Tibial artery (tissue), 4 donors: ENCODE measurements at regions of chr22 and their contacts with region 1.

Region 1: GRCh38 chr22:35582861-35583670 is 34.1 kb downstream of the MB start:
- DNase-seq: peak; percentile 32 to 69
- H3K4me3 ChIP-seq: no peak overlapping the region
- H3K27ac ChIP-seq: no peak overlapping the region
- H3K4me1 ChIP-seq: peaks cover 0 to 8% (median 5%) of the 10 kb centered on the region in 4 donors
- H3K27me3 ChIP-seq: no peaks in the 10 kb centered on the region
- CTCF ChIP-seq: peak; percentile 88 to 93

Region 2: DNA sequence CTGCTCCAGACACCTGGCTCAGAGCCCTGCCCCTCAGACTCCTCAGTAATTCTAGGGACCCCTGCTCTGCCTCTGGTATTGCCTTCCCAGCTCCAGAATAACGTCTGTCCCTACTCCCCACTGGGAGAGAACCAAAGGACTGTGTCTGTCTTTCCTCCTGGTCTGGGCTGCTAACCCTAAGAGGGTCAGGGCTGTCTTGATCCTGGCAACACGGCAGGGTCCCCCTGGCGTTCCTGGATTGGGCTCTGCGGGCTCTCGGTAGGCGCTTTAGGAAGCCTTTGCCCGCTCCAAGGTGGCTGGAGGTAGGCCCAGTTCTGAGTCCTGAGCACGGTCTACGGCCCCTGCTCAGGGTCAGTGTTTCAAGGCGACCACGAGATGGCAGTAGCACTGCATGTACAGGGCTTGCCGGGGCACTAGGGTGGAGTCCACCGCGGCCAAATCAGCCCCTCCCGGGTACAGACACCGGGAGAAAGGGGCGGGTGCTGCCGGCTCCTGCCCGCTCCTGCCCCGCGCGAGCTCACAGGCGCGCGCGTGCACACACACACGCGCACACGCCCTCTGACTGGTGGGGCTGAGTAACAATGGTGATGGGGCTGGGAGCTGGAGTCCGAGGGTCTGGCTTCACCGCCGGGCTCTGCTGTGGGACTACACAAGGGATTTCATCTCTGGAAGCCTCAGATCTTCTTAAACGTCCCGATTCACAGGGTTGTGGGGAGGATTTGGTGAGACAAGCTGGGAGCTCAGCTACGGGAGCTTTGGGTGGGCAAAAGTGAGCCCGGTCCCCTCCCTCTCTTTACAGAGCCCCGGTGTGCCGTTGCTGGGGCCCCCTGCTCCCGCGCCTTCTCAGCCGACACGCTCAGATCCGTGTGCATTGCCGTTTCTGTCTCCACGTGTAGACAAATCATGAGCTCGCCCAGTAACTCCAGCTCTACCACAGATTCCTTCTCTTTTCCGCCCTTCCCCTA is 232.2 kb before region 1 on chr22:
- intact Hi-C with region 1: loop called (anchors 2 kb)
- DNase-seq: peak; percentile 91 to 96
- H3K4me3 ChIP-seq: peak overlapping the region; percentile 48 to 52
- H3K27ac ChIP-seq: peak overlapping the region; percentile 66 to 76
- H3K4me1 ChIP-seq: peaks cover 0 to 38% (median 21%) of the 10 kb centered on the region in 4 donors
- H3K27me3 ChIP-seq: peaks cover 0 to 4% of the 10 kb centered on the region in 2 donors
- CTCF ChIP-seq: peak; percentile 92 to 97

Region 3: GRCh38 chr22:35430897-35431322 is 152.2 kb before region 1 on chr22:
- intact Hi-C with region 1: loop called (anchors 2 kb)
- DNase-seq: peak; percentile 80 to 91
- H3K4me3 ChIP-seq: no peak overlapping the region
- H3K27ac ChIP-seq: no peak overlapping the region
- H3K4me1 ChIP-seq: peaks cover 0 to 6% (median 2%) of the 10 kb centered on the region in 4 donors
- H3K27me3 ChIP-seq: no peaks in the 10 kb centered on the region
- CTCF ChIP-seq: peak; percentile 98 to 99

Region 4: GRCh38 chr22:35489239-35489638 is 93.8 kb before region 1 on chr22:
- intact Hi-C with region 1: no loop called
- DNase-seq: no peak
- H3K4me3 ChIP-seq: no peak overlapping the region
- H3K27ac ChIP-seq: no peak overlapping the region
- H3K4me1 ChIP-seq: no peaks in the 10 kb centered on the region
- H3K27me3 ChIP-seq: peaks cover 0 to 22% of the 10 kb centered on the region in 2 donors
- CTCF ChIP-seq: no peak

Region 5: DNA sequence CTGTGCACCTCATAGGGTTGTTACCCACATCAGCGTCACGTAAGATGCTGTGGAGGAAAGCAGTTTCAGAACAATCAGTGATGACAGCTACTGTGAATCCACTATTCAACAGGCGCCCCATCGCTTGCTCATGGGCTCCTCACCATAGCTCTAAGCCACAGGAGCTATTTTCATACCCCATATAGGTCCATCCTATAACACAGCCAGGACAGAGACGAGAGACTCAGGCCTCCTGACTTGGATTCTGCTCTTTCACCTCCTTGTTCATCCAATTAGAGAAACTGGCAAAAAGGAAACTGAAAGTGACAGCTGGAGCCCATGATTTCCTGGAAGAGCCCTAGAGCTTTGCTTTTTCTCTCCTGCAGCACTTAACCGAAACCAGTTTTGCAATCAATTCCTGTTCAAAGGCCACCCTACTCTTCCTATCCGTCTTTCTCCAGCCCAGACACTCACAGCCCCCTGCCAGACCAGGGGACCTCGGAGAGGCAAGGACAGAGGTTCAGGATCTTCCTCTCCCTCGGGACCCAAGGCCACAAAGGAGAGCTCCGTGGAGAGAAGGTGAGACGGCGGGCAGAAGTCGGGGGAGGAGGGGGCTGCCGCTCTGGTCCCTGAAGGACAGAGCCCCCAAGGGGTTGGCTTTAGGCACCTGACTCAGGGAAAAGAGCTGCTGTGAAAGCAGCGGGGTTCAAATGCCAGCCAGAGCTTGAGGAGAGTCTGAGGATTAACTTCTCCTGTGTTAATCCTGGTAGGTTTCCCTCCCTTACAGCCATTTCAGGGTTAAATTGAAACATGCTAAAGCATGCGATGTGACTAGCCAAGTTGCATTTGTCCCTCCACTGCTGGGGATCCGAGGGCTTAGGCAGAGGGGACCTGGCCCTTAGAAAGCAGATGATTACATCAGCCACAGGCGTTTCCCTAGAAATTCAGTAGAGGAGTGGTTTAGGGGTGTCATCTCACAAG is 65.3 kb after region 1 on chr22 and contains the start of gene APOL6:
- intact Hi-C with region 1: no loop called
- DNase-seq: no peak
- H3K4me3 ChIP-seq: peak within 1 kb of the TSS; percentile 57
- H3K27ac ChIP-seq: peak within 1 kb of the TSS; percentile 76 to 78
- H3K4me1 ChIP-seq: peaks cover 0 to 43% (median 28%) of the 10 kb centered on the region in 4 donors
- H3K27me3 ChIP-seq: no peaks in the 10 kb centered on the region
- CTCF ChIP-seq: no peak